Aorta (tissue), 5 donors: ENCODE measurements at regions of chr13 and their contacts with region 1.

Region 1: GRCh38 chr13:80342471-80343380 is 1.8 kb upstream of the SPRY2 start:
- DNase-seq: peak; percentile 87 to 95
- ATAC-seq: peak; percentile 86
- H3K4me3 ChIP-seq: peak overlapping the region; percentile 81 to 86
- H3K27ac ChIP-seq: peak overlapping the region; percentile 14 to 83
- H3K4me1 ChIP-seq: no peaks in the 10 kb centered on the region
- H3K27me3 ChIP-seq: no peaks in the 10 kb centered on the region

Region 2: DNA sequence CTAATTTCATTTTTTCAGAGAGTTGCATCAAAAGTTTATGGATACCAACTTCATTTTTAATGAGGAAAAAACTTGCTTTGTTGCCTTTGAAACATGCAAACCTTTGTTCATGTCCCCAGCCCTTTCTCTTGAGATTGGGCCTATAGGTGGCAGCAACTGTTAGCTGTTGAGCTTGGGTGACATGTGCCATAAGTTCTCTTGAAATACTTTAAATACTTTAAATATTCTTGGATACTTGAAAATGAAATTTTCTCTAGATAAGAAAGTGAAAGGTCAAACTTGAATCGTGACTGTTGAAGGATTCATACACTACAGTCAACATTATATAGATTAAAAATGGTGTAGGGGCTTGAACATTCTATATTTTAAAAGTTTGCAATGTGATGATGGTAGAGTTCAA is 566.9 kb before region 1 on chr13:
- intact Hi-C with region 1: loop called in 1 of 2 experiments (anchors 5 kb)
- DNase-seq: no peak
- ATAC-seq: no peak
- H3K4me3 ChIP-seq: no peak overlapping the region
- H3K27ac ChIP-seq: no peak overlapping the region
- H3K4me1 ChIP-seq: peaks cover 0 to 2% of the 10 kb centered on the region in 2 donors
- H3K27me3 ChIP-seq: no peaks in the 10 kb centered on the region

Region 3: GRCh38 chr13:80048802-80049201 is 293.9 kb before region 1 on chr13:
- intact Hi-C with region 1: loop called (anchors 5 to 10 kb)
- DNase-seq: peak; percentile 91 to 94
- ATAC-seq: peak; percentile 89
- H3K4me3 ChIP-seq: no peak overlapping the region
- H3K27ac ChIP-seq: no peak overlapping the region
- H3K4me1 ChIP-seq: peaks cover 0 to 5% of the 10 kb centered on the region in 2 donors
- H3K27me3 ChIP-seq: no peaks in the 10 kb centered on the region

Region 4: GRCh38 chr13:80100636-80101035 is 242.1 kb before region 1 on chr13:
- intact Hi-C with region 1: no loop called
- DNase-seq: no peak
- ATAC-seq: no peak
- H3K4me3 ChIP-seq: no peak overlapping the region
- H3K27ac ChIP-seq: no peak overlapping the region
- H3K4me1 ChIP-seq: no peaks in the 10 kb centered on the region
- H3K27me3 ChIP-seq: no peaks in the 10 kb centered on the region

Region 5: GRCh38 chr13:80132741-80133601 is 209.8 kb before region 1 on chr13:
- intact Hi-C with region 1: loop called (anchors 5 kb)
- DNase-seq: peak in 1 of 2 donors; percentile 55
- ATAC-seq: peak; percentile 81
- H3K4me3 ChIP-seq: peak overlapping the region; percentile 0 to 21
- H3K27ac ChIP-seq: peak overlapping the region; percentile 66 to 84
- H3K4me1 ChIP-seq: peaks cover 0 to 1% of the 10 kb centered on the region in 2 donors
- H3K27me3 ChIP-seq: no peaks in the 10 kb centered on the region

Region 6: GRCh38 chr13:80363890-80364503 is 21.3 kb after region 1 on chr13:
- intact Hi-C with region 1: loop called in 1 of 2 experiments (anchors 2 kb)
- DNase-seq: no peak
- ATAC-seq: no peak
- H3K4me3 ChIP-seq: no peak overlapping the region
- H3K27ac ChIP-seq: no peak overlapping the region
- H3K4me1 ChIP-seq: no peaks in the 10 kb centered on the region
- H3K27me3 ChIP-seq: no peaks in the 10 kb centered on the region